Endothelial cell of umbilical vein (primary cell): ENCODE measurements at regions of chr3 and their contacts with region 1.

Region 1: DNA sequence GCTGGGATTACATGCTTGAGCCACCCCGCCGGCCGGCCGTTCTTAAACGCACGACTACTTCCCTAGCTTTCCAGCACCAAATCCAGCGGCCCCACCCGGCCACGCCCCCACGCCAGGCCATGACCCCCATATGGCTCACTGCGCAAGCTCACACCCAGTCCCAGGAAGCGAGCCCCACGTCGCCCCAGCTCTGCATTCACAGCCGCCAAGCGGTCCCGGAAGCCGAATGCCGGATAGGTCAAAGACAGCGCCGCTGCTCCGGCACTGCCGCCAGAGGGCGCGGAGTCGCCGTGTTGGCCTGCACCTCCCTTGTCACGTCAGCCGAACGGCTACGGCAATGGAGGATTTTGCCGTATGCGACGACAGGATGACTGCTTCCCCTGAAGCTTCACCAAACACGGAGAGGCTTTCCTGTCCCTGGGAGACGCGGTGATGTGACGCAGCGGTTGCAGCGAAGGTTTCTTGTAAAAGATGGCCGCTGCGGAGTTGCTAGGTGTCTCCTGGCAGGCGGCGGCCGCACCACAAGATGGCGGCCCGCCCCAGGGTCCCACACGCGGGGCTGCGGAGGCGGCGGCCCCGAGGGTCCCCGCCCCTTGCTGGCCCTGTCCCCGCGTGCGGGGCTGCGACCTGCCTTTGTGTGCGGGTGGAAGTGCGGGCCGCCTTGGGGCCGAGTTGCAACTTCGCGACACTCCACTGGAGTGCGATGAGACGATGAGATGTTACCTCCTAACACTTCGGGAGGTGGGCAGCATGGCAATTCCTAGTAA is 30.2 kb upstream of the RPN1 start:
- DNase-seq: peak; percentile 97
- H3K4me3 ChIP-seq: peak overlapping the region in 2 of 3 experiments; percentile 47 to 60
- H3K27ac ChIP-seq: peak overlapping the region; percentile 54
- H3K4me1 ChIP-seq: peaks cover 5% of the 10 kb centered on the region
- H3K27me3 ChIP-seq: no peaks in the 10 kb centered on the region
- CTCF ChIP-seq: peak; percentile 99
- POLR2A ChIP-seq: peak; percentile 71

Region 2: GRCh38 chr3:128617557-128618397 is 63.0 kb before region 1 on chr3:
- CTCF ChIA-PET with region 1: interaction called, 21 read pairs
- POLR2A ChIA-PET with region 1: no interaction called
- dilution Hi-C with region 1: no loop called
- intact Hi-C with region 1: loop called (anchors 1 kb)
- DNase-seq: peak; percentile 98
- H3K4me3 ChIP-seq: peak overlapping the region; percentile 48 to 65 (median 58)
- H3K27ac ChIP-seq: peak overlapping the region; percentile 53
- H3K4me1 ChIP-seq: peaks cover 35% of the 10 kb centered on the region
- H3K27me3 ChIP-seq: no peaks in the 10 kb centered on the region
- CTCF ChIP-seq: peak; percentile 86 to 98
- POLR2A ChIP-seq: no peak

Region 3: DNA sequence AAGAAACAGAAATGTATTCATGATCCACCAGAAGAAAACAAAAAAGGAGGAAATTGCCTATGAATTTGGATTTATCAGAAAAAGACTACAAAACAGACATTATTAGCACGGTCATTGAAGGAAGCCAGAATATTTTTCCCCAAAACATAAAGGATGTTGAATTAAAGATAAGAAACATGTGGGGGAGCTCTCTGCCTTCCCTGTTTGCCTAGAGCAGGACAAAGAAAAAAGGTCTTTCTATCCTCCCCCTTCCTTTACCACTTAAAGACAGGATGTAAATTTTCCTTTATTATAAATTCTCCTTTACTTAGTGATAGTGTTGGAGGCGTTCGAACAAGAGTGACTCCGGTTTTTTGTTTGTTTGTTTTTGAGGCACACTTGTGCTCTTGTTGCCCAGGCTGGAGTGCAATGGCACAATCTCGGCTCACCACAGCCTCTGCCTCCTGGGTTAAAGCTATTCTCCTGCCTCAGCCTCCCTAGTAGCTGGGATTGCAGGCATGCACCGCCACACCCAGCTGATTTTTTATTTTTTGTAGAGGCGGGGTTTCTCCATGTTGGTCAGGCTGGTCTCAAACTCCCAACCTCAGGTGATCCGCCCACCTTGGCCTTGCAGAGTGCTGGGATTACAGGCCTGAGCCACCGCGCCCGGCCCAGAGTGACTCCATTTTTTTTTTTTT is 15.3 kb before region 1 on chr3:
- CTCF ChIA-PET with region 1: interaction called, 18 read pairs
- POLR2A ChIA-PET with region 1: no interaction called
- dilution Hi-C with region 1: no loop called
- intact Hi-C with region 1: no loop called
- DNase-seq: peak; percentile 50
- H3K4me3 ChIP-seq: no peak overlapping the region
- H3K27ac ChIP-seq: no peak overlapping the region
- H3K4me1 ChIP-seq: peaks cover 3% of the 10 kb centered on the region
- H3K27me3 ChIP-seq: peaks cover 5 to 9% of the 10 kb centered on the region in 2 experiments
- CTCF ChIP-seq: peak in 1 of 2 donors; percentile 7
- POLR2A ChIP-seq: no peak

Region 4: DNA sequence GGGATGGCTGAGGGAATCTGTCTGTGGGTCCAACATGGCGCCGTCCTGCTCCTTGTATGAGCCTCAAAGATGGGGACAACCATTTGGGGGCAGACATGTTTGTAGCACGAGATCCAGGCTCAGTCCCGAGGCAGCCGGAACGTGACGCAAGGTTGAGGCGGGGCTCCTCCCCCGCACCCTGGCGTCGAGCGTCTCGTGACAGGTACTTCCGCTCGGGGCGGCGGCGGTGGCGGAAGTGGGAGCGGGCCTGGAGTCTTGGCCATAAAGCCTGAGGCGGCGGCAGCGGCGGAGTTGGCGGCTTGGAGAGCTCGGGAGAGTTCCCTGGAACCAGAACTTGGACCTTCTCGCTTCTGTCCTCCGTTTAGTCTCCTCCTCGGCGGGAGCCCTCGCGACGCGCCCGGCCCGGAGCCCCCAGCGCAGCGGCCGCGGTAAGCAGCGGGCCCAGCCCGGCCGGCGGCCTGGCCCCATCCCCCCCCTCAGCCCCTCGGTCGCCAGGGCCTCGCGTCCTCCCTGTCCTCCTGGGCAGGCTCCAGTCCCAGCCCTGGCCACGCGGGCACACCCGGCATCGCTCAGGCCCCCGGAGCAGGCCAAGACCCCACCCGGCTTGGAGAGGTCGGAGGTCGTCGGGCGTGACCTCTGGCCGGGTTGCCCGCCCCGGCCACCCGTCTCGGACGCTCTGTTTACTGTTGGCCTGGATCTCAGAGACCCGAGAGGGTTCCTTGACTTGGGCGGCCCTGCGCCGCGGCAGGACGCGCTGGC is 45.3 kb after region 1 on chr3 and contains the start of gene RAB7A:
- CTCF ChIA-PET with region 1: interaction called, 14 read pairs
- POLR2A ChIA-PET with region 1: no interaction called
- dilution Hi-C with region 1: no loop called
- intact Hi-C with region 1: loop called (anchors 1 kb)
- DNase-seq: peak; percentile 99
- H3K4me3 ChIP-seq: peak within 1 kb of the TSS; percentile 53 to 89 (median 84)
- H3K27ac ChIP-seq: peak within 1 kb of the TSS; percentile 90
- H3K4me1 ChIP-seq: peaks cover 18% of the 10 kb centered on the region
- H3K27me3 ChIP-seq: peaks cover 6 to 7% of the 10 kb centered on the region in 2 experiments
- CTCF ChIP-seq: no peak
- POLR2A ChIP-seq: peak; percentile 90
- total RNA-seq, gene RAB7A: 249 and 262 TPM in 2 replicates

Region 5: GRCh38 chr3:128804017-128804810 is 123.4 kb after region 1 on chr3:
- CTCF ChIA-PET with region 1: interaction called, 8 read pairs
- POLR2A ChIA-PET with region 1: no interaction called
- dilution Hi-C with region 1: no loop called
- intact Hi-C with region 1: loop called (anchors 2 kb)
- DNase-seq: peak; percentile 80
- H3K4me3 ChIP-seq: peak overlapping the region in 1 of 3 experiments; percentile 43
- H3K27ac ChIP-seq: peak overlapping the region; percentile 62
- H3K4me1 ChIP-seq: peaks cover 29% of the 10 kb centered on the region
- H3K27me3 ChIP-seq: no peaks in the 10 kb centered on the region
- CTCF ChIP-seq: no peak
- POLR2A ChIP-seq: no peak

Region 6: GRCh38 chr3:128845778-128846485 is 165.1 kb after region 1 on chr3:
- CTCF ChIA-PET with region 1: interaction called, 60 read pairs
- POLR2A ChIA-PET with region 1: no interaction called
- dilution Hi-C with region 1: no loop called
- intact Hi-C with region 1: loop called (anchors 1 kb)
- DNase-seq: peak; percentile 79
- H3K4me3 ChIP-seq: peak overlapping the region; percentile 37 to 54 (median 54)
- H3K27ac ChIP-seq: no peak overlapping the region
- H3K4me1 ChIP-seq: peaks cover 4% of the 10 kb centered on the region
- H3K27me3 ChIP-seq: no peaks in the 10 kb centered on the region
- CTCF ChIP-seq: peak; percentile 65 to 78
- POLR2A ChIP-seq: no peak